CD4-positive, alpha-beta T cell (primary cell): ENCODE measurements at regions of chr2 and their contacts with region 1.

Region 1: DNA sequence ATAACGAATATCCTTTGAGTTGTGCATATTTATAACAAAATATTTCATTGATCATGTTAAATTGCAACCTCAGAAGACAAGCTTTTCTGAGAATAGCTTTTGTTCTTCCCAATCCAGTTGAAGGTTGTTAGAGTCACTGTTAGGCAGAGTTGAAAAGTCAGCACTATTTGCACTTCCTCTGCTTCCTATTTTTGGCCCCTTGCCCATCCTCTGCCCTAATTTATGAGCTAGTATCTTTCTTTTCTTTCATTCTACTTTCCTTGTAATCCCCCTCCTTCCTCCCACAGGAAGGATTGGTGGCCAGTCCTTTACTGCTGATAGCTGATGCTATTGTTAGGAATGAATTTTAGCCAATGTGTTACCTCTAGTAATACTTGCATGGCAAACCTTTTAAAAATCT is 4.9 kb downstream of the RALB start:
- DNase-seq: no peak
- ATAC-seq: no peak
- H3K4me3 ChIP-seq: no peak overlapping the region
- H3K4me3 Mint-ChIP-seq: peak overlapping the region; percentile 39
- H3K27ac ChIP-seq: no peak overlapping the region
- H3K27ac Mint-ChIP-seq: no peak overlapping the region
- H3K4me1 ChIP-seq: peaks cover 28% of the 10 kb centered on the region
- H3K4me1 Mint-ChIP-seq: peaks cover 52% of the 10 kb centered on the region
- H3K27me3 ChIP-seq: no peaks in the 10 kb centered on the region
- H3K27me3 Mint-ChIP-seq: no peaks in the 10 kb centered on the region
- CTCF ChIP-seq: no peak

Region 2: GRCh38 chr2:119638685-119639554 is 618.6 kb before region 1 on chr2:
- CTCF ChIA-PET with region 1: no interaction called
- POLR2A ChIA-PET with region 1: no interaction called
- intact Hi-C with region 1: no loop called
- DNase-seq: no peak
- ATAC-seq: no peak
- H3K4me3 ChIP-seq: no peak overlapping the region
- H3K4me3 Mint-ChIP-seq: no peak overlapping the region
- H3K27ac ChIP-seq: no peak overlapping the region
- H3K27ac Mint-ChIP-seq: no peak overlapping the region
- H3K4me1 ChIP-seq: peaks cover 4% of the 10 kb centered on the region
- H3K4me1 Mint-ChIP-seq: peaks cover 5% of the 10 kb centered on the region
- H3K27me3 ChIP-seq: no peaks in the 10 kb centered on the region
- H3K27me3 Mint-ChIP-seq: peaks cover 5% of the 10 kb centered on the region
- CTCF ChIP-seq: no peak

Region 3: GRCh38 chr2:120303177-120303576 is 45.7 kb after region 1 on chr2:
- CTCF ChIA-PET with region 1: no interaction called
- POLR2A ChIA-PET with region 1: no interaction called
- intact Hi-C with region 1: loop called in 1 of 2 experiments (anchors 5 kb)
- DNase-seq: no peak
- ATAC-seq: no peak
- H3K4me3 ChIP-seq: no peak overlapping the region
- H3K4me3 Mint-ChIP-seq: no peak overlapping the region
- H3K27ac ChIP-seq: no peak overlapping the region
- H3K27ac Mint-ChIP-seq: no peak overlapping the region
- H3K4me1 ChIP-seq: no peaks in the 10 kb centered on the region
- H3K4me1 Mint-ChIP-seq: no peaks in the 10 kb centered on the region
- H3K27me3 ChIP-seq: no peaks in the 10 kb centered on the region
- H3K27me3 Mint-ChIP-seq: no peaks in the 10 kb centered on the region
- CTCF ChIP-seq: no peak

Region 4: GRCh38 chr2:120369250-120369649 is 111.7 kb after region 1 on chr2:
- CTCF ChIA-PET with region 1: no interaction called
- POLR2A ChIA-PET with region 1: no interaction called
- intact Hi-C with region 1: no loop called
- DNase-seq: no peak
- ATAC-seq: no peak
- H3K4me3 ChIP-seq: no peak overlapping the region
- H3K4me3 Mint-ChIP-seq: no peak overlapping the region
- H3K27ac ChIP-seq: no peak overlapping the region
- H3K27ac Mint-ChIP-seq: no peak overlapping the region
- H3K4me1 ChIP-seq: no peaks in the 10 kb centered on the region
- H3K4me1 Mint-ChIP-seq: no peaks in the 10 kb centered on the region
- H3K27me3 ChIP-seq: peaks cover 0 to 4% of the 10 kb centered on the region in 2 experiments
- H3K27me3 Mint-ChIP-seq: peaks cover 5% of the 10 kb centered on the region
- CTCF ChIP-seq: no peak

Region 5: GRCh38 chr2:120379916-120380893 is 122.7 kb after region 1 on chr2:
- CTCF ChIA-PET with region 1: no interaction called
- POLR2A ChIA-PET with region 1: no interaction called
- intact Hi-C with region 1: no loop called
- DNase-seq: no peak
- ATAC-seq: no peak
- H3K4me3 ChIP-seq: no peak overlapping the region
- H3K4me3 Mint-ChIP-seq: no peak overlapping the region
- H3K27ac ChIP-seq: no peak overlapping the region
- H3K27ac Mint-ChIP-seq: no peak overlapping the region
- H3K4me1 ChIP-seq: no peaks in the 10 kb centered on the region
- H3K4me1 Mint-ChIP-seq: no peaks in the 10 kb centered on the region
- H3K27me3 ChIP-seq: peaks cover 0 to 2% of the 10 kb centered on the region in 2 experiments
- H3K27me3 Mint-ChIP-seq: peaks cover 13% of the 10 kb centered on the region
- CTCF ChIP-seq: no peak